Psoas muscle (tissue), 8 donors: ENCODE measurements at regions of chr9 and their contacts with region 1.

Region 1: GRCh38 chr9:104868687-104869404 is 59.1 kb downstream of the ABCA1 start:
- DNase-seq: peak; percentile 72 to 86
- ATAC-seq: peak; percentile 88 to 95 (median 89)
- H3K4me3 ChIP-seq: no peak overlapping the region
- H3K27ac ChIP-seq: peak overlapping the region; percentile 81
- H3K4me1 ChIP-seq: peaks cover 69% of the 10 kb centered on the region
- H3K27me3 ChIP-seq: no peaks in the 10 kb centered on the region
- CTCF ChIP-seq: no peak

Region 2: GRCh38 chr9:104750185-104750767 is 118.6 kb before region 1 on chr9:
- intact Hi-C with region 1: no loop called
- DNase-seq: no peak
- ATAC-seq: no peak
- H3K4me3 ChIP-seq: no peak overlapping the region
- H3K27ac ChIP-seq: no peak overlapping the region
- H3K4me1 ChIP-seq: peaks cover 12% of the 10 kb centered on the region
- H3K27me3 ChIP-seq: no peaks in the 10 kb centered on the region
- CTCF ChIP-seq: no peak

Region 3: GRCh38 chr9:104907278-104907951 is 38.6 kb after region 1 on chr9:
- intact Hi-C with region 1: loop called (anchors 5 kb)
- DNase-seq: no peak
- ATAC-seq: peak; percentile 39 to 69 (median 62)
- H3K4me3 ChIP-seq: no peak overlapping the region
- H3K27ac ChIP-seq: peak overlapping the region; percentile 65
- H3K4me1 ChIP-seq: peaks cover 78% of the 10 kb centered on the region
- H3K27me3 ChIP-seq: no peaks in the 10 kb centered on the region
- CTCF ChIP-seq: no peak